HepG2 (cell line): ENCODE measurements at regions of chr3 and their contacts with region 1.

Region 1: DNA sequence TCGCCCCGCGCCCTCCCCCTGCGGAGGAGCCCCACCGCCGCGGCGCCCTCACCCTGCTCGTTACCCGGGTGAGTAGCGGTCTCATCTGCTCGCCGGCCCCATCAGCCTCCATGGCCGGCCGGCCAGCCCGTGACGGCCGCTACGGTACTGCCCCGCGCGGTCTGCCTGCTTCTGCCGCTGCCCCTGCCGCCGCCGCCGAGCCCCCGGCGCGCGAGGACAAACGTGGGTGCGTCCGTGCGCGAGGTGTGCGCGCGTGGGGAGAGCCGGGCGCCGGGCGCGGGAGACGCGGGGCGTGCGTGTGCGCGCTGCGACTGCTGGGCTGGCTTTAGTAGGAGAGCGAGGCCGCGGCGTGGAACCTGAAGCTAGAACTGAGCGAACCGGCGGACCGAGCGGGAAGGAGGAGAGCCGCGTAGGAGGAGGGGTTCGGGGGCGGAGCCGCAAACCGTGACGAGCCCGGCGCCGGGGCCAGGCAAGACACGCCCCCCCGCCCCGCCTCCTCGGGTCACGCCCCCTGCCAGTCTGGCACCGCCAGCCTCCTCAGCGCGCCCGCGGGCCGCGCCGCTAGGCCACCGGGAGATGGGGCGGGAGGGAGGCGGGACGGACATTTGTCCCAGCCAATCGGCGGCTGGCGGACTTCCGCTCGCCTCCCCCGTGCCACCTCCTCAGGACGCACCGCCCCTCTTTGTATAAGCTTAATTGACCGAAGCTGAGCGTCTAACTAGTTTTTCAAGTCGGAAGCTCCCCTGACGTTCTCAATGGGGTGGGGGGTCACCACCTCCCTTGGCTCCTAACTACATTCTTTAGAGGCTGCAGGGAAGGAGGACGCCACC is at the start of gene SLC4A7:
- DNase-seq: peak; percentile 86
- ATAC-seq: peak; percentile 97
- H3K4me3 ChIP-seq: peak within 1 kb of the TSS; percentile 82 to 92 (median 91)
- H3K27ac ChIP-seq: peak within 1 kb of the TSS; percentile 82
- H3K4me1 ChIP-seq: peaks cover 42% of the 10 kb centered on the region
- H3K27me3 ChIP-seq: no peaks in the 10 kb centered on the region; a peak in 1 of 5 replicates
- CTCF ChIP-seq: no peak
- EP300 ChIP-seq: 0 out of 4 replicates have a peak, but pooled peaks of 1 of the 2 experiments have one; percentile 3
- POLR2A ChIP-seq: peak; percentile 89 to 96
- RAD21 ChIP-seq: peak; percentile 53
- total RNA-seq, gene SLC4A7: 34.0 and 43.8 TPM in 2 replicates

Region 2: GRCh38 chr3:27319847-27320526 is 164.2 kb before region 1 on chr3:
- CTCF ChIA-PET with region 1: no interaction called
- POLR2A ChIA-PET with region 1: no interaction called
- in situ Hi-C with region 1: no loop called
- intact Hi-C with region 1: loop called (anchors 2 kb)
- DNase-seq: no peak
- ATAC-seq: no peak
- H3K4me3 ChIP-seq: no peak overlapping the region
- H3K27ac ChIP-seq: no peak overlapping the region
- H3K4me1 ChIP-seq: peaks cover 48% of the 10 kb centered on the region
- H3K27me3 ChIP-seq: no peaks in the 10 kb centered on the region
- CTCF ChIP-seq: no peak
- EP300 ChIP-seq: no peak
- POLR2A ChIP-seq: no peak
- RAD21 ChIP-seq: no peak

Region 3: GRCh38 chr3:27533718-27534573 is 49.7 kb after region 1 on chr3:
- CTCF ChIA-PET with region 1: no interaction called
- POLR2A ChIA-PET with region 1: interaction called, 4 read pairs
- in situ Hi-C with region 1: no loop called
- intact Hi-C with region 1: loop called (anchors 5 kb)
- DNase-seq: peak; percentile 88
- ATAC-seq: peak; percentile 93
- H3K4me3 ChIP-seq: peak overlapping the region in 1 of 3 experiments; percentile 19; a peak in 2 of 6 replicates
- H3K27ac ChIP-seq: peak overlapping the region; percentile 19
- H3K4me1 ChIP-seq: peaks cover 71% of the 10 kb centered on the region
- H3K27me3 ChIP-seq: no peaks in the 10 kb centered on the region
- CTCF ChIP-seq: peak; percentile 39
- EP300 ChIP-seq: peak in 1 of 2 experiments; percentile 74; a peak in 2 of 4 replicates
- POLR2A ChIP-seq: no peak
- RAD21 ChIP-seq: no peak

Region 4: GRCh38 chr3:27659279-27660021 is 175.2 kb after region 1 on chr3:
- CTCF ChIA-PET with region 1: no interaction called
- POLR2A ChIA-PET with region 1: no interaction called
- in situ Hi-C with region 1: no loop called
- intact Hi-C with region 1: loop called (anchors 5 kb)
- DNase-seq: peak; percentile 48
- ATAC-seq: peak; percentile 98
- H3K4me3 ChIP-seq: peak overlapping the region in 1 of 3 experiments; percentile 20; a peak in 2 of 6 replicates
- H3K27ac ChIP-seq: no peak overlapping the region
- H3K4me1 ChIP-seq: no peaks in the 10 kb centered on the region
- H3K27me3 ChIP-seq: no peaks in the 10 kb centered on the region
- CTCF ChIP-seq: peak; percentile 88
- EP300 ChIP-seq: no peak
- POLR2A ChIP-seq: no peak
- RAD21 ChIP-seq: peak; percentile 46; the same call in 1 of the 2 replicates

Region 5: DNA sequence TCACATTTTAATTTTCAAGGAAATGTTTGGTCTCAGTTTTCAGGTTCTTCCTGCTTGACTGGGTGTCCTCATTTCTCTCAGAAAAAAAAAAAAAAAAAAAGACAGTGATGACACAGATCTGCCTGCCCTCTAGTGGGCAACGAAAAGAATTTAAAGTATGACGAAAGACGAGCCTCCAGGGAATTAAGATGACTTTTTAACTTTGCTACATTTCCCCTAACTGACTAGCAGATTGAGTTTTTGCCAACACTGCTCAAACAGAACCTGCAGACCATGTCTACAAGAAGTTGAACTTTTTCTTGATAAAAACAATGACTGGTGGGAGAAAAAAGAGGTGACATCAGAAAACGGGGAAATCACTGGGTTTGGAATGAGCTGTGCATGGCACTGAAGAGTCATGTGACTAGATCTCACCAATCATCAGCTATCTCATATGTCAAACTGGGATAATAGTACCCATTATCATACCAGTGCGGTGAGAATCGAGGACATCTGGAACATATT is 197.1 kb after region 1 on chr3:
- CTCF ChIA-PET with region 1: no interaction called
- POLR2A ChIA-PET with region 1: interaction called, 6 read pairs
- in situ Hi-C with region 1: no loop called
- intact Hi-C with region 1: loop called (anchors 1 kb)
- DNase-seq: peak; percentile 74
- ATAC-seq: peak; percentile 69
- H3K4me3 ChIP-seq: peak overlapping the region; percentile 48 to 62 (median 51); a peak in 4 of 6 replicates
- H3K27ac ChIP-seq: peak overlapping the region; percentile 60
- H3K4me1 ChIP-seq: peaks cover 37% of the 10 kb centered on the region
- H3K27me3 ChIP-seq: no peaks in the 10 kb centered on the region
- CTCF ChIP-seq: peak; percentile 69
- EP300 ChIP-seq: no peak
- POLR2A ChIP-seq: no peak
- RAD21 ChIP-seq: peak; percentile 31; the same call in 1 of the 2 replicates